ENCODE measurements at regions of chr1 and their contacts with region 1.

Region 1: DNA sequence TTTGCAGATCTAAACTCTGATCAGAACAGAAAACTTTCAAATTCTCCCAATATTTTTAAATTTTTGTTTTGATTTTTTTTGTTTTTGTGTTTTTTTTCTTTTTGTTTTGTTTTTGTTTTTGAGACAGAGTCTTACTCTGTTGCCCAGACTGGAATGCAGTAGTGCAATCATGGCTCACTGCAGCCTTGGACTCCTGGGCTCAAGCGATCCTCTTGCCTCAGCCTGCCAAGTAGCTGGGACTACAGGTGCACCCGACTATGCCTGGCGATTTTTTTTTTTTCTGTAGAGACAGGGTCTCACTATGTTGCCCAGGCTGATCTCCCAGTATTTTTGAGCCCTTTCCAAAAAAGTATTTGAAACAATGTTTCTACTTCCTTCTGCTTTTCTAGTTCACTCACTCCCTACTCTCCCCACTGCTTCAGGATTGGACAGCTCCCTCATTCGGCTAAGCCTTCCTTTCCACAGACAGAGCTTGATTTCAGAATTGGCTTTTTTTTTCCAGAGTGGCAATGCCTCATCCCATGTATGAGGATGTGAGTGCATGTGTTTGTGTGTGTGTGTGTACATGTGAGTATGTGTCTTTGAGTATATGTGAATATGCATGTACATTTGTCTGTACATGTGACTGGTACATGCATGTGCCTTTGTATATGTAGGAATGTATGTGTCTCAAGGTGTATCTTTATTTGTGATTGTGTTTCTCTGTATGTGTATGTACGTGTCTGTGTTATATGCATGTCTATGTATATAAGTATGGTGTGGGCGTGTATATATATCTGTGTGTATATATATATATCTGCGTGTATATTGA is 11.9 kb downstream of the LHX4 start:
- DNase-seq: no peak
- H3K4me3 ChIP-seq: no peak overlapping the region
- H3K27ac ChIP-seq: no peak overlapping the region
- H3K4me1 ChIP-seq: peaks cover 19 to 46% (median 30%) of the 10 kb centered on the region in 4 experiments
- H3K27me3 ChIP-seq: peaks cover 0 to 11% (median 7%) of the 10 kb centered on the region in 4 experiments; a peak in 6 of 7 replicates
- CTCF ChIP-seq: no peak
- EP300 ChIP-seq: no peak
- POLR2A ChIP-seq: no peak
- RAD21 ChIP-seq: no peak

Region 2: GRCh38 chr1:180144659-180145357 is 97.1 kb before region 1 on chr1:
- CTCF ChIA-PET with region 1: no interaction called
- POLR2A ChIA-PET with region 1: no interaction called
- DNase-seq: no peak
- H3K4me3 ChIP-seq: no peak overlapping the region
- H3K27ac ChIP-seq: no peak overlapping the region
- H3K4me1 ChIP-seq: no peaks in the 10 kb centered on the region
- H3K27me3 ChIP-seq: no peaks in the 10 kb centered on the region
- CTCF ChIP-seq: no peak
- EP300 ChIP-seq: no peak
- POLR2A ChIP-seq: no peak
- RAD21 ChIP-seq: no peak

Region 3: DNA sequence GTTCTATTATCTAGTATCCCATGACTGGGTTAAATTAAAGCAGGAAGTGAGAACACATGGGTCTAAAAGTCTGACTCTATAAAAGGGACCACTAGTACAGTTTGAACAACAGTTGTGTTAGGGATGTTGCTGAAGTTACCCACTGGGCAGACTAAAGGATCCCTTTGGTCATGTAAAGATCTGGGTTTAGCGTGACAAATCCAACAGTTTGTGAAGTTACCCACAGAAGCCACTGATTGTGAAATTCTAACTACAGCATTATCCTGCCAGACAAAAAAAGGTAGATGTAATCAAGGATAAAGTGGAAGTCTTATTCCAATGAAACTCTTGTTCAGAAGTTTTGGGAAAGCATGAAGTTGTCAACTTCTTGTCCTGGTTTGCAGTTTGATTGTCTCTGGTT is 81.6 kb before region 1 on chr1:
- CTCF ChIA-PET with region 1: no interaction called
- POLR2A ChIA-PET with region 1: no interaction called
- DNase-seq: peak in 1 of 2 experiments; percentile 2
- H3K4me3 ChIP-seq: no peak overlapping the region
- H3K27ac ChIP-seq: no peak overlapping the region
- H3K4me1 ChIP-seq: peaks cover 3 to 13% (median 7%) of the 10 kb centered on the region in 4 experiments; a peak in 6 of 7 replicates
- H3K27me3 ChIP-seq: peaks cover 0 to 3% (median 0%) of the 10 kb centered on the region in 4 experiments; a peak in 3 of 7 replicates
- CTCF ChIP-seq: no peak
- EP300 ChIP-seq: no peak
- POLR2A ChIP-seq: no peak
- RAD21 ChIP-seq: no peak

Region 4: DNA sequence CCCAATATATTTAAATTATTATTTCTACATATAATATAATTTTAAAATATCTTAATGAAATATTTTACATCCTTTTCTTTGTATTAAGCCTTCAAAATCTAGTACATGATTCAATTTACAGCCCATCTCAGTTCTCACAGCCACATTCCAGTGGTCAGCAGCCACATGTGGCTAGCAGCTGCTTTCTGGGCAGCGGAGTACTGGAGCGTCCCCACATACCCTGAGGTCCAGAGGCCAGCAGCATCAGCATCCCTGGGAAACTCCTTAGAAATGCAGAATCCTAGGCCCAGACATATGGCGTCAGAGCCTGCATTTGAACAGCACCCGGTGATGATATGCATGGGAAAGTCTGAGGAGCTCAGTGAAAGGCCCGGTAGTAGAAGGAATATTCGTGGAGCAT is 20.5 kb before region 1 on chr1:
- CTCF ChIA-PET with region 1: interaction called, 5 read pairs
- POLR2A ChIA-PET with region 1: interaction called, 26 read pairs
- DNase-seq: no peak
- H3K4me3 ChIP-seq: no peak overlapping the region
- H3K27ac ChIP-seq: no peak overlapping the region
- H3K4me1 ChIP-seq: no peaks in the 10 kb centered on the region
- H3K27me3 ChIP-seq: peaks cover 0 to 6% (median 4%) of the 10 kb centered on the region in 4 experiments; a peak in 4 of 7 replicates
- CTCF ChIP-seq: no peak
- EP300 ChIP-seq: no peak
- POLR2A ChIP-seq: no peak
- RAD21 ChIP-seq: no peak

Region 5: DNA sequence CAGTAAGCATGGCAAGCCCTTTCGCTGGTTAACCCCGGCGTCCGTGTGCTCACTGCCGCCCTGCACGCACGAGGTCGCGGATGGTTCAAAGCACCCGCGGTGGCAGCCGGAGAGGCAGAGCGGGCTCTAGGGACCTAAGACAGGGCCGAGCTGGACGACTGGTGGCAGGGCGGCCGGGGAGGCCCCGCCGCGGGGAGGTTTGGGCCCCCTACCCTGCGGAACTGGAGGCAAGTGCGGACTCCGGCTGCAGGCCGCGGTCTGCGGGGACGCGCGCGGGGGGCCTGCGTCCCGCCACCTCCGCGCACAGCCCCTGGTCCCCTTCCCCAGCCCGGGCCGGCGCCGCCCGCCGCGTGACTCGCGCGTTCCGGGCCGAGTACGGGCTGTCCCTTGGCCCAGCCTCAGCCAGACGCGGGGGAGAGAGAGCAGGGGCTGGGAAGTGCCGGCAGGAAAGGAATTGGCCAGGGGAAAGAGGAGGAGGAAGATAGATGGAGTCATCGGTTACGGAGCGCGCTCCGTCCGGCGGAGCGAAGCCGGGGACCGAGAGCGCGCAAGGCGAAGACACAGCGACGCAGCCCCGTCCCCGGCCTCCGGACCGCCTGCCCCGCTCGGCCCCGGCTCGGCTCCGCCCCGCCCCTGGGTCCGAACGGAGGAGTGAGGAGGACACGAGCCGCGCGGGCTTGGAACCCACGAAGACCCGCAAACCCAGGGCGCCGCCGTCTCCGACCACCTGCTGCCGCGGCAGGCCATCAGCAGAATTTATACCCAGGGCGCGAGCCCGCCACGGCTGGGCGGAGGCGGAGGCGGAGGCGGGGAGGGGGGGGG is 12.6 kb before region 1 on chr1:
- CTCF ChIA-PET with region 1: interaction called, 31 read pairs
- POLR2A ChIA-PET with region 1: interaction called, 29 read pairs
- DNase-seq: peak in 1 of 2 experiments; percentile 85
- H3K4me3 ChIP-seq: peak overlapping the region; percentile 45 to 67 (median 56)
- H3K27ac ChIP-seq: no peak overlapping the region
- H3K4me1 ChIP-seq: peaks cover 13 to 33% (median 21%) of the 10 kb centered on the region in 4 experiments
- H3K27me3 ChIP-seq: peaks cover 35 to 69% (median 55%) of the 10 kb centered on the region in 4 experiments
- CTCF ChIP-seq: no peak
- EP300 ChIP-seq: no peak
- POLR2A ChIP-seq: no peak
- RAD21 ChIP-seq: no peak

Region 6: GRCh38 chr1:180380259-180381183 is 138.6 kb after region 1 on chr1:
- CTCF ChIA-PET with region 1: no interaction called
- POLR2A ChIA-PET with region 1: no interaction called
- DNase-seq: no peak
- H3K4me3 ChIP-seq: no peak overlapping the region
- H3K27ac ChIP-seq: no peak overlapping the region
- H3K4me1 ChIP-seq: no peaks in the 10 kb centered on the region
- H3K27me3 ChIP-seq: no peaks in the 10 kb centered on the region
- CTCF ChIP-seq: no peak
- EP300 ChIP-seq: no peak
- POLR2A ChIP-seq: no peak
- RAD21 ChIP-seq: no peak